Right ventricle myocardium inferior (tissue), 1 donor: ENCODE measurements at regions of chr6 and their contacts with region 1.

Region 1: GRCh38 chr6:4775584-4776494 is at the start of gene CDYL:
- DNase-seq: peak; percentile 93
- ATAC-seq: peak; percentile 93
- total RNA-seq, gene CDYL: 32.1 TPM

Region 2: DNA sequence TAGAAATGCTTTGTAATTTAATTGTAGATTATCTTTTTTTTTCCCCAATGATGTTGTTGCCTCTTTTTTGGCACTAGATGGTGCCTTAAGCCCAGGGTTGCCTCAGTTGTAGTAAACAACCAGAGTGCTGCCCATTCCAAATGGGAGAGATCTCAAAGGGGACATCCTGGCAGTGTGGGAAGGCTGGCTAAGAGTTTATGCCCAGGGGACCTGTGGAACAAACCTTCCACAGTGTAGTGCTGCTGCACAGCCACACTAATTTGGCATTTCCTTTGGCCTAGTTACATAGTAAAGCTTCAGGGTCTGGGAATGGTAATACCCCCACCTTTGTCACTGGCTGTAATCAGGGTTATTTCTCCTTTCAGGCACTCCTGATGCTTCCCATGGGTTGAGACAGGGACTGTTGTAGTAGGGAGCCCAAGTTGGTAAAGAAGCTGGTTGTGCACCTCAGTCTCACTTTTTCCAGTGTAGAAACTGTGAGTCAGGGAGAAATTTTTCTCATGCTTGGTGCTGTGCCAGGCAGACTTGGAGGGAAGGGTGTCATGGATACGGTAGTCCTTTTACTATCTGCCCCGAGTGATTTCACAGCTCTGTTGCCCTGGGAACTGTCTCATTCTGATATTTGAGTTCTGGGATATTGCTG is 462.7 kb before region 1 on chr6:
- intact Hi-C with region 1: loop called (anchors 5 kb)
- DNase-seq: no peak
- ATAC-seq: peak; percentile 59

Region 3: DNA sequence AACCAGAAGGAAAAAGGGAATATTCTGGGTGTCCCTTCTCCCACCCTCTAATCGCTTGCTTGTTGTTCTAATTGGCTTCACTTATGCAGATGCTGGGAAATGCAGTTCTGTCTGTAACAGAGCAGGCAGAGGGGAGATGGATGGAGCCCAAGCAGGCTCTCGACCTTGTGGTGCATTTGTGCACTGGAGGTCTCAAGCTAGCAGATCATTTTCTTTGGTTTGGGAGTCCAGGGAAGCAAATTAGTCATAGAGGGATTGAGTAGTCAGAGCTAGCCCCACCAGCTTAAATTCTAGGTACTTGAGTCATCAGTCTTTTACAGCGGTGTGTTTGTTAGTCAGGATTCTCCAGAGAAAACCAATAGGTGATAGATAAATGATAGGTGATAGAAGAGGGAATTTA is 405.8 kb before region 1 on chr6:
- intact Hi-C with region 1: loop called (anchors 5 kb)
- DNase-seq: no peak
- ATAC-seq: no peak

Region 4: DNA sequence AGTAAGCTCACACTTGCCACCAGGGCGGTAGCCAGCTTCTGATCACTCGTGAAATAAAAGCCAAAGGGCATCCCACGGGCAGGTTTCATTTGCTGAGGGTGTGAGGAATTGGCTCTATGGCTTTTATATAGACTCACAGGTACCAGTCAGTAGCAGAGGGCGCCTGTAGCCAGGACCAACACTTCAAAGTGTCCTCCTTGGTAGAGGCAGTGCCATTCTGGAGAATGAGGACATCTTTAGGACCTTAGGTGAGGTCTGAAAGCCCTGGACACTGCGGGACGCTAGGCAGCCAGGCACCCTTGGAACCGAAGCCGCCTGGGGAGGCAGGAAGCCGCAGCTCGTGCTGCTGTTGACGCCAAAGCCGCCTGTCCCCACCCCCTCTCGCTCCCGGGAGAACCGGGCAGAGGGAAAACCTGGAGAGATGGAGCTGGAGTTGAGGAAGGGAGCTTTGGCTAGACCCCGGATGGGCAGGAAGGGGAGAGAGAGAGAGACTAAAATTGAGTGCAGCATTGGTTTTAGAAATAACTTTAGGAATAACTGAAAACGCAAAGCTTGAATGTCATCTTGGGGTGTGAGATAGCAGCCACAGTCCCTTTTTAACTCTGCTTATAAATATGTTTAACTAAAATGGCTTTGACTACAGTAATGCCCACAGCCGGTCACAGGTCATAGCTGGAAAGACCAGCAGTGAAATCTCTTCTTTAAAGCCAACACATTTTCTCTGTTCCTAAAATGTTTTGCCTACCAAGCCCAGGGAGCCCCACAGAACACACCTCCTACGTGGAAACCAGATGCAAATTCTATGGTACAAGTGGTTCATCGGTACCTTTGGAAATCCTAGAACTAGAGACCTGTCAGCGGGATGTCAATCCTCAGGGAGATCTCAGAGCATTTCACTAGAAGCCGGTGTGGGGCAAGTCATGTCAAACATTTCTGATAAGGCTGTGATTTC is 128.1 kb before region 1 on chr6:
- intact Hi-C with region 1: loop called (anchors 1 kb)
- DNase-seq: peak; percentile 84
- ATAC-seq: peak; percentile 95